Posterior vena cava (tissue), 2 donors: ENCODE measurements at regions of chr20 and their contacts with region 1.

Region 1: DNA sequence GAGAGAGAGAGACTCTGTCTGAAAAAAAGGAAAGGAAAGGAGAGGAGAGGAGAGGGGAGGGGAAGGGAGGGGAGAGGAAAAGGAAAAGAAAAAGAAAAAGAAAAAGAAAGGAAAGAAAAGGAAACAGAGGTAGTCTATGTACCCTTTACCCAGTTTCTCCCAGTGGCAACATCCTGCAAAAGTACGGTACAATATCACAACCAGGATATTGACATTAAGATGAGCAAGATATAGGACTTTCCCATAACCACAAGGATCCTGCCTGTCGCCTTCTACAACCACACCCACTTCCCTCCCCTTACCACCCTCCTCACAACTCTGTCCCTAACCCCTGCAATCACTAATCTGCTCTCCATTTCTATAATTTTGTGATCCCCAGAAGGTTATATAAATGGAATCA is 4.0 kb downstream of the C20orf96 start:
- DNase-seq: no peak

Region 2: GRCh38 chr20:208942-209566 is 77.5 kb before region 1 on chr20:
- intact Hi-C with region 1: no loop called
- DNase-seq: no peak

Region 3: GRCh38 chr20:347640-348484 is 61.4 kb after region 1 on chr20:
- intact Hi-C with region 1: loop called in 1 of 2 experiments (anchors 2 kb)
- DNase-seq: peak; percentile 96